HEK293 (cell line): ENCODE measurements at regions of chr19 and their contacts with region 1.

Region 1: DNA sequence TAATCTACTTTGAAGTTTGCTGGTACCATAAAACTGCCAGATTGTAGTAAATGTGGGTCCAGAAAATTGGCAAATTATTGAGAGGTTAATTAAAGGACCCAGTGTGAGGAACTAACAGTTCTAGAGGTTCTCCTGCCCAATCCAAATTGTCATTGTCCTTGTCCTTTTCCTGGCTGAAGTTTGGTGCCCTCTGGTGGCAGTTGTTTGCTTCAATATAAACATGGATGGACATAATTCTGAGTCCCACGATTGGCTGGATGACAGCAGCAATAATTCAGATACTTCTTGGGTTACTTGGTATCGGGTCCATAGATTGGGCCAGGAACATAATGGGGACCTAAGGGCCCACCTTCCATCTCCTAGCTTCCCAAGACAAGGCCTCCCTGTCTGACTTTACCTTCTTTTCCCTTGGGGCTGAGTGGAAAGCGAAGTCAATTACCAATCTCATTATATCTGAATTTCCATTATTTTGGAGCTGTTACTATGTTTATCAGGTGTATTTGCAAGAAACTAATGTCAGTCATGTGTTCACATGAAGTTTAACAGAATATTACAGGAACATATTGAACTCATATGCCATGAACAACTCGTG is 33.8 kb upstream of the GARRE1 start:
- H3K4me3 ChIP-seq: no peak overlapping the region
- H3K27ac ChIP-seq: no peak overlapping the region
- H3K4me1 ChIP-seq: peaks cover 39% of the 10 kb centered on the region
- CTCF ChIP-seq: peak; percentile 73

Region 2: GRCh38 chr19:34120846-34121639 is 99.5 kb before region 1 on chr19:
- CTCF ChIA-PET with region 1: interaction called, 38 read pairs
- POLR2A ChIA-PET with region 1: no interaction called
- H3K4me3 ChIP-seq: no peak overlapping the region
- H3K27ac ChIP-seq: no peak overlapping the region
- H3K4me1 ChIP-seq: peaks cover 7% of the 10 kb centered on the region; the same call in 1 of the 2 replicates
- CTCF ChIP-seq: peak; percentile 52; the same call in 1 of the 2 replicates

Region 3: DNA sequence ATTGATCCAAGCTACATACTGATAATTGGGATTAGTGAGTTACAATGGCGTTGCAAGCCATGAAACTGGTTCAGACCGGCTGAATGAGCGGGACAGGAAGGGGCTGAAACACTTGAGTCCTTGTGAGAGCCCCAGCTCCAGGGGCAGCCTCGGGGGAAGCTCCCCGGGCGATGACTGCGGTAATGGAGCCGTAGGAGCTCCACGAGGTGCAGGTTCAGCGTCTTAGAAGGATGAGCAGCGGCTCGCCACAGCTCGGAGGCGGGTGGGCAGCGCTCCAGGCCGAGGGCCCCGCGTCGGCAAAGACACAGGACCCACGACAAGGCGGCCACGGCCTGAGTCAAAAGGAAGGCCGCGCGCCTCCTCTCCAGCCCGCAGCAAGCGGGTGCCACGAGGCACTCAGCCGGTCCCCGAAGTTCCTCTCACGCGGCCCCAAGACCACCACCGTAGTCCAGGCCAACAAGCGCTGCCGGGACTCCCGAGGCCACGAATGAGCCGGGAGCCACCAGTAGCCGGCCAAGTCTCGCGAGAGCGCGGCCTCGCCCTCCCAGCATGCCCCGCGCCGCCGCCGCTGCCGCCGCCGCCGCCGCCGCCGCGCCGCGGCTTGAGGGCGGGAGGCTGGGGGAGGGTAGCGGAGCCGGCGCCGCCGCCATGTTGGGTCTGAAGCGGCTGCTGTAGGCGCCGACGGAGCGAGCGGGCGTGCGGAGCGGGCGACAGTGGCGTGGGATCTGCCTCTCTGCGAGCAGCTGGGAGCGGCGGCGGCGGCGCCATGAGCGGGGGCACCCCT is 48.5 kb before region 1 on chr19 and contains the start of gene LSM14A:
- CTCF ChIA-PET with region 1: interaction called, 64 read pairs
- POLR2A ChIA-PET with region 1: interaction called, 12 read pairs
- H3K4me3 ChIP-seq: peak within 1 kb of the TSS; percentile 85
- H3K27ac ChIP-seq: peak within 1 kb of the TSS; percentile 100
- H3K4me1 ChIP-seq: peaks cover 37% of the 10 kb centered on the region
- CTCF ChIP-seq: peak; percentile 20

Region 4: DNA sequence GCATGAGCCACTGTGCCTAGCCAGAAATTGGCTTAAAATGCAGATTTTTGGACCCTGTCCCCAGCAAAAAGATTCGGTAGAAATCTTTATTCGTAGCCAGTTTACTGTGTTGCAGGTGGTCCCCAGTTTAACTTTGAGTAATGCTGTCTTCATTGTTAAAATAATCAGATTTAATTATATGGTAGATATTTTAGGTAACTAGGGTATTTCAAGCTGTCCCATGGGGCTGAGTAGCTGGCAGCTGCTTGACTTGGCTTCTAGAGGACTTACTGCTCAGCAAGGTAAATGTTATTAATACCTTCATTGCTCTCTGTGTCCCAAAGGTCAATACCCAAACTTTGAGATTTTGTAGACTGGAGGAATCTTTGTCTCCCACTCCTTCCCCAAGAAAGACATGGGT is 27.1 kb before region 1 on chr19:
- CTCF ChIA-PET with region 1: interaction called, 12 read pairs
- POLR2A ChIA-PET with region 1: interaction called, 4 read pairs
- H3K4me3 ChIP-seq: no peak overlapping the region
- H3K27ac ChIP-seq: 0 out of 2 replicates have a peak overlapping the region, but pooled peaks have one; percentile 5
- H3K4me1 ChIP-seq: peaks cover 42% of the 10 kb centered on the region
- CTCF ChIP-seq: no peak

Region 5: DNA sequence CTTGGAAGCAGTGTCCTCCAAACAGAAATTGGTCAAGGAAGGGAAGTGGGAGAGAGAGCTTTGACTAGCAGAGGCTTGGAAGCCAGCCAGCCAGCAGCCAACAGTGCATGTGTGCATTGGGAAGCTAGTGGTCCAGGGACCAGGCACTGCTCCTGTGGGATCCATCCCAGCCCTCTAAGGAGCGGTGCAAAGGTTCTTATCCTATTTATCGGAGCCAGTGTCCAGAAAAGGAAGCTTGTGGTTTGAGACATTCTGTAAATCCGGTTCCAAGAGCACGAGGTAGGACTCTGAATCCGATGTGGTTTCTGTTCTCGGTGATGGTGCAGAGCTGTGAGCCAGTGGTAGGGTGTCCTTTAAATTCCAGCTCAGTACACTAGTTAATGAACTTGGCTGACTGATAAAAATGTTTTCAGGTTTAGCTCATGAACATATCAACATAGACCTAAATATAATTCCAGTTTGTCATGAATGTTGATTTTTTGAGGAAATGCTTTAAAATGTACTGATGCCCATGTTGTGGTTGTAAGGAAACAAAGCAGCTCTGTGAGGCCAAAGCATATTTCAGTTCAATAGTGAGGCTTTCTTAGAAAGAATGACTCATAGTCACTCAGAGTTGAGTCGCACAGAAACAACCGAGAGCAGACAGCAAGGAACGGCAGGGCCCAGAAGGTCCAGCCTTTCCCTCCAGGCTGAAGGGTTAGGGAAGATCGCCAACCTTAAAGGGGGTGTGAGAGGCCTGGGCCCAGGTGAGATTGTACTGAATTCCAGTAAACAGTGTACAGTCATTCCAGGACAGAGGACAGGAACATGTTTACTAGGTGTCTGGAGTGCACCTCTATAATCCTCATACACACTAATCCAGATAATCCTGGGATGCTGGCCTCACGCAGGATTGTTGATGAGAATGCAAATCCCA is 12.3 kb after region 1 on chr19:
- CTCF ChIA-PET with region 1: interaction called, 50 read pairs
- POLR2A ChIA-PET with region 1: no interaction called
- H3K4me3 ChIP-seq: no peak overlapping the region
- H3K27ac ChIP-seq: peak overlapping the region; percentile 69
- H3K4me1 ChIP-seq: peaks cover 14% of the 10 kb centered on the region
- CTCF ChIP-seq: no peak

Region 6: DNA sequence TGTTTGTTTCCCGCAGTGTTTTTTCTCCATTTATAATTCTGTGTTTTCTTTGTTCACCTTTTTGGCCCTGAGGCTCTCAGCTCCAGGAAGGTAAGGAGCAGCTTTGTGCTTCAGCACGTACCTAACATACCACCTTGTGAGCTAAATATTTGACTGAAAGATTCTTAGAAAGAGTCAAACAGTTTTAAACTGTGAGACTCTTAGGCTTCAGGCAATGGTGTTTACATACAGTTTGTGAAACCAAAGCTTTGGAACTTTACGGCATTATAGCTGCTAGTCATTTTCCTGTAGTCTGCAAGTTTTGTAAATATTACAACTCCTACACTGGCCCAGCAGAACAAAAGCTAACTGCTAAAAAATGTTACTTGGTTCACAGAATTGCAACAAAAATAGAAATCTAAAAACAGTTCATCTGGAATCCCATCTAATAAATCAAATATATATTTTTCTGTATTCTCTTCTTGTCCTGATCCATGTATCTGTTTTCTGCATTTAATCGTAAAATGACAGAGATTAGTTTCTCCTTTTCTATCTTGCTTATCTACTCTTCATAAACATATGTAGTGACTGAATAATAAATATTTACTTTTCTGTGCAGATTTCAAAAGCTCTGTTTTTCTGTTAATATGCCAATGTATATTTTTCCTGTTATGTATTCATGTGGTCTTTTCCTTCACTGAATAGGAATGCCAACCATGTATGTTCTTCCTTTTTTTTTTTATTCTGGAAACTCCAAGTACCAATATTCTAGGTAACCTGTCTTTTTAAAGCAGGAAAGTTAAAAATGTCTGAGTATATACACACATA is 105.6 kb after region 1 on chr19:
- CTCF ChIA-PET with region 1: no interaction called
- POLR2A ChIA-PET with region 1: no interaction called
- H3K4me3 ChIP-seq: no peak overlapping the region
- H3K27ac ChIP-seq: peak overlapping the region; percentile 26; the same call in 1 of the 2 replicates
- H3K4me1 ChIP-seq: peaks cover 8% of the 10 kb centered on the region; the same call in 1 of the 2 replicates
- CTCF ChIP-seq: no peak

Region 7: GRCh38 chr19:34534206-34534605 is 313.6 kb after region 1 on chr19:
- CTCF ChIA-PET with region 1: no interaction called
- POLR2A ChIA-PET with region 1: no interaction called
- H3K4me3 ChIP-seq: no peak overlapping the region
- H3K27ac ChIP-seq: no peak overlapping the region
- H3K4me1 ChIP-seq: no peaks in the 10 kb centered on the region
- CTCF ChIP-seq: no peak